Endothelial cell of umbilical vein (primary cell): ENCODE measurements at regions of chr20 and their contacts with region 1.

Region 1: DNA sequence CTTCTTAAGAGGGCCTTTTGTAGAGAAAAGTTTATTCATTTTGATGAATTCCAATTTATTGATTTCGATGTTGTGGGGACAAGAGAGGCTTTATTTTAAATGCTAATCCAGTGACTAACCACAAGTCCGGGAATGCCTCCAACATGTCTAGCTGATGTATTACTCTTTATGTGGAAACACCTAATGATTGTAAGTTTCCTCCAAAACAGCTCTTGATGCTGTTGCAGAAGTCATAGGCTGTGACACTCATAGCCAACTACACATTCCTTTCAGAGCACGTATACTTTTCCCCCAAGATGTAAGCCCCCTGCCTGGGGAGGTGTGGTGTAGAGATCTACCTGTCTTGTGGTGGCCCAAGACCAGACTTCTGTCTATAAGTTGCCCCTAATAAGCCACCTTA is 61.3 kb upstream of the RNF24 start:
- DNase-seq: peak; percentile 85
- H3K4me3 ChIP-seq: no peak overlapping the region
- H3K27ac ChIP-seq: no peak overlapping the region
- H3K4me1 ChIP-seq: peaks cover 6% of the 10 kb centered on the region
- H3K27me3 ChIP-seq: no peaks in the 10 kb centered on the region
- CTCF ChIP-seq: no peak
- POLR2A ChIP-seq: no peak

Region 2: DNA sequence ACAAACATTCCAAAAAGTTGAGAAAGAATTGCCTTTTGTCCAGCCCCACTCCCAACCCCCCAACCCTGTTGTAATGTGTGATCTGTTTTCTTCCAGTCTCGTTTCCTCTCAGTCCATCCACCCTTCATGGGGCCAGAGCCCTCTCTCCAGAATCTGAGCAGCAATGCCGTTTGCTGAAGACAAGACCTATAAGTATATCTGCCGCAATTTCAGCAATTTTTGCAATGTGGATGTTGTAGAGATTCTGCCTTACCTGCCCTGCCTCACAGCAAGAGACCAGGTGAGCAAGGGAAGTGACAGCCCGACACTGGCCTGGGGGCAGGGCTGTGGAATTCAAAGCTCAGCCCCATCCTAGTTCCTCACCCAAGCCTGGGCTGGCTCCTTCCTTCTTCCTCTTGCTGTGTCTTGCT is 222.2 kb before region 1 on chr20:
- CTCF ChIA-PET with region 1: interaction called, 27 read pairs
- POLR2A ChIA-PET with region 1: no interaction called
- dilution Hi-C with region 1: no loop called
- intact Hi-C with region 1: no loop called
- DNase-seq: no peak
- H3K4me3 ChIP-seq: no peak overlapping the region
- H3K27ac ChIP-seq: no peak overlapping the region
- H3K4me1 ChIP-seq: no peaks in the 10 kb centered on the region
- H3K27me3 ChIP-seq: no peaks in the 10 kb centered on the region
- CTCF ChIP-seq: no peak
- POLR2A ChIP-seq: no peak

Region 3: GRCh38 chr20:3888622-3889488 is 187.8 kb before region 1 on chr20 and contains the start of gene PANK2:
- CTCF ChIA-PET with region 1: interaction called, 20 read pairs
- POLR2A ChIA-PET with region 1: interaction called, 4 read pairs
- dilution Hi-C with region 1: no loop called
- intact Hi-C with region 1: loop called (anchors 1 kb)
- DNase-seq: peak; percentile 99
- H3K4me3 ChIP-seq: peak within 1 kb of the TSS; percentile 87 to 100 (median 99)
- H3K27ac ChIP-seq: peak within 1 kb of the TSS; percentile 93
- H3K4me1 ChIP-seq: peaks cover 40% of the 10 kb centered on the region
- H3K27me3 ChIP-seq: no peaks in the 10 kb centered on the region
- CTCF ChIP-seq: peak; percentile 28 to 46
- POLR2A ChIP-seq: peak; percentile 92
- total RNA-seq, gene PANK2: 54.3 and 55.3 TPM in 2 replicates

Region 4: DNA sequence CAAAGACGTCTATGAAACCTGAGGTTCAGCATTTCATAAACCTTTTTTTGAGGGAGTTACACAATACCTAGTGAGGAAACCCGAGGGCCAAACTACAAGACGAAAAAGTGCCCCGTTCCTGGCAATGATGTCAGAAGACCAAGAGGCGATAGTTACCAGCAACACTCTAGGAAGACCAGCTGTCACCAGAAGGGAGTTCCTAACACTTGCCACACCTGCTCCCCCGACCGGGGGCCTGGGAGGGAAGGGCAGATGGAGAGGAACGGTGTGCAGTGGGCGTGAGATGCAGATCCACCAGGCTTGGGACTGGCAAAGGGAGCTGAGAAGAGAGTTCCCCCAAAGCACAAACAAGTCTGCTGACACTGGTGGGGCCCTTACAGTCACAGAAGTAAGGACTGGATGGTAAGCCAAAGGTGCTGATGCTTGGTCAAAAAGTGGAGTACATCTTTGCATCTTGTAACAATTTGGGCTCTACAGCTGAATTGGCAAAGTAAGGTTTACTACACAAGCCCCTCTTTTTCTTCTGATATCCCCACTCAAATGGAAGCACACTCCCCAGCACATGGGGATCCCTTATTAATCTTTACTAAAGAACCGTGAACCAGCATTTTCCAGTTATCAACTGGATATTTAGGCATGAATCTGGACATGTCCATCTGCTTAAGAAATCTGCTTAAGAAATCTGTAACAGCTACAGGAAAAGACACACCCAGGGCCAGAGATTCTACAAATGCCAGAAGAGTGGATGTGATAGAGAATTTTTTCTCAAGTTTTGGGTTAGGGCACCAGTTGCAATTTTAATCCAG is 149.0 kb before region 1 on chr20:
- CTCF ChIA-PET with region 1: interaction called, 47 read pairs
- POLR2A ChIA-PET with region 1: no interaction called
- dilution Hi-C with region 1: no loop called
- intact Hi-C with region 1: loop called (anchors 2 kb)
- DNase-seq: no peak
- H3K4me3 ChIP-seq: no peak overlapping the region
- H3K27ac ChIP-seq: no peak overlapping the region
- H3K4me1 ChIP-seq: peaks cover 9% of the 10 kb centered on the region
- H3K27me3 ChIP-seq: no peaks in the 10 kb centered on the region
- CTCF ChIP-seq: no peak
- POLR2A ChIP-seq: no peak

Region 5: GRCh38 chr20:4006640-4007039 is 70.0 kb before region 1 on chr20:
- CTCF ChIA-PET with region 1: interaction called, 103 read pairs
- POLR2A ChIA-PET with region 1: no interaction called
- dilution Hi-C with region 1: no loop called
- intact Hi-C with region 1: no loop called
- DNase-seq: no peak
- H3K4me3 ChIP-seq: no peak overlapping the region
- H3K27ac ChIP-seq: no peak overlapping the region
- H3K4me1 ChIP-seq: peaks cover 2% of the 10 kb centered on the region
- H3K27me3 ChIP-seq: no peaks in the 10 kb centered on the region
- CTCF ChIP-seq: no peak
- POLR2A ChIP-seq: no peak

Region 6: GRCh38 chr20:4014031-4014474 is 62.6 kb before region 1 on chr20:
- CTCF ChIA-PET with region 1: interaction called, 103 read pairs
- POLR2A ChIA-PET with region 1: no interaction called
- dilution Hi-C with region 1: no loop called
- intact Hi-C with region 1: loop called (anchors 1 kb)
- DNase-seq: peak; percentile 77
- H3K4me3 ChIP-seq: peak overlapping the region in 1 of 3 experiments; percentile 68
- H3K27ac ChIP-seq: no peak overlapping the region
- H3K4me1 ChIP-seq: peaks cover 10% of the 10 kb centered on the region
- H3K27me3 ChIP-seq: no peaks in the 10 kb centered on the region
- CTCF ChIP-seq: peak; percentile 46 to 53
- POLR2A ChIP-seq: no peak

Region 7: DNA sequence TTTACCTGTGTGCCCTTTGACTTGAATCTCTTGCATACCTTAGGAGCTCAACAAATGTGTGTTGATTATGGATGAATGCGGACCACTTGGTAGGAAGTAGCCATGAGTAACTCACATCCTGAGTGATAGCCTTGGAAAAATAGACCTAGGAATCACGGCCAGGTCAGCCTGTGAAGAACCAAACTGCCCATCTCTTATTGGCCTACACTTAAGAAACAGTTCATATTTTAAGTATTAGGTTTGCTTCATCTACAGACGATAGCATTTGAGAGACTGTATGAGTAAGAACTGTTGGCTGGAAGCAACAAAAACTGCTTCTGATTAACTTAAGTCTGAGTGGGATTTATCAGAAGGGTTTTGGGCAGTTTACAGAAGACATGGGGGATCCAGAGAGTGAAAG is 324.9 kb after region 1 on chr20:
- CTCF ChIA-PET with region 1: no interaction called
- POLR2A ChIA-PET with region 1: no interaction called
- dilution Hi-C with region 1: no loop called
- intact Hi-C with region 1: no loop called
- DNase-seq: peak; percentile 41
- H3K4me3 ChIP-seq: no peak overlapping the region
- H3K27ac ChIP-seq: no peak overlapping the region
- H3K4me1 ChIP-seq: peaks cover 8% of the 10 kb centered on the region
- H3K27me3 ChIP-seq: peaks cover 2 to 11% of the 10 kb centered on the region in 2 experiments
- CTCF ChIP-seq: no peak
- POLR2A ChIP-seq: no peak